HepG2 (cell line): ENCODE measurements at regions of chr9 and their contacts with region 1.

Region 1: GRCh38 chr9:87395804-87396479 is 101.7 kb upstream of the DAPK1 start:
- DNase-seq: peak; percentile 91
- ATAC-seq: peak; percentile 99
- H3K4me3 ChIP-seq: peak overlapping the region in 1 of 3 experiments; percentile 0; a peak in 2 of 6 replicates
- H3K27ac ChIP-seq: no peak overlapping the region
- H3K4me1 ChIP-seq: peaks cover 23% of the 10 kb centered on the region
- H3K27me3 ChIP-seq: peaks cover 0 to 9% of the 10 kb centered on the region in 2 experiments; a peak in 3 of 5 replicates
- CTCF ChIP-seq: peak; percentile 19; the same call in 1 of the 2 replicates
- EP300 ChIP-seq: peak in 1 of 2 experiments; percentile 64; a peak in 2 of 4 replicates
- POLR2A ChIP-seq: no peak
- RAD21 ChIP-seq: no peak

Region 2: DNA sequence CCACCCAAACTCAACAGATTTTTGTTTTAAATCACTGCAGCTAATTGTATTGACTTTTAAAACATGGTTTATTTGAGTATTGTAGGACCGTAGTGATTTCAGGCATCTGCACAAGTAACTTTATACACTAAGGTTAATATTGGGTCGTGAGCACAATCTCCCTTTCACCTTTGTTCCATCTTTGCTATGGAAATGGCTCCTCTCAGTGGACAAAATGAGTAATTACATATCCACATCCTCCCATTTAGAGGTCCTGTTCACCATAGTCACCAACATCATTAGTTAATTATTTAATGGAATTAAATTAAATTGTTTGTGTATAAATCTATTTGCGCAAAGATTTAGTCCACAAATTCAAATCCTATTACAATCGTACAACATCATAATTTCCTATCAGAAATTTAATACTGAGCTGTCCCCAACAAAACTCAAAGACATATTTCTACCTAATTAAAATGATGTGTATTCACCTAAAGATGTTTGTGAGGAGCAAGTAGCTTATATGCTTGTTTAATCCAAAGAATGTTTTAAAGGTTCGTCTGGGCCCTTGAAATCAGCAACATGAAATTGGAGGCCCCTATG is 71.2 kb before region 1 on chr9:
- CTCF ChIA-PET with region 1: no interaction called
- POLR2A ChIA-PET with region 1: no interaction called
- in situ Hi-C with region 1: no loop called
- intact Hi-C with region 1: no loop called
- DNase-seq: peak; percentile 50
- ATAC-seq: peak; percentile 65; the same call in 2 of the 3 replicates
- H3K4me3 ChIP-seq: no peak overlapping the region
- H3K27ac ChIP-seq: no peak overlapping the region
- H3K4me1 ChIP-seq: no peaks in the 10 kb centered on the region
- H3K27me3 ChIP-seq: no peaks in the 10 kb centered on the region
- CTCF ChIP-seq: peak; percentile 83
- EP300 ChIP-seq: no peak
- POLR2A ChIP-seq: no peak
- RAD21 ChIP-seq: peak; percentile 71; the same call in 1 of the 2 replicates

Region 3: GRCh38 chr9:87342743-87343142 is 53.2 kb before region 1 on chr9:
- CTCF ChIA-PET with region 1: no interaction called
- POLR2A ChIA-PET with region 1: no interaction called
- in situ Hi-C with region 1: no loop called
- intact Hi-C with region 1: loop called (anchors 5 kb)
- DNase-seq: no peak
- ATAC-seq: no peak
- H3K4me3 ChIP-seq: no peak overlapping the region
- H3K27ac ChIP-seq: no peak overlapping the region
- H3K4me1 ChIP-seq: peaks cover 12% of the 10 kb centered on the region
- H3K27me3 ChIP-seq: peaks cover 0 to 10% of the 10 kb centered on the region in 2 experiments; a peak in 3 of 5 replicates
- CTCF ChIP-seq: no peak
- EP300 ChIP-seq: no peak
- POLR2A ChIP-seq: no peak
- RAD21 ChIP-seq: no peak